Endothelial cell of umbilical vein (primary cell): ENCODE measurements at regions of chr4 and their contacts with region 1.

Region 1: DNA sequence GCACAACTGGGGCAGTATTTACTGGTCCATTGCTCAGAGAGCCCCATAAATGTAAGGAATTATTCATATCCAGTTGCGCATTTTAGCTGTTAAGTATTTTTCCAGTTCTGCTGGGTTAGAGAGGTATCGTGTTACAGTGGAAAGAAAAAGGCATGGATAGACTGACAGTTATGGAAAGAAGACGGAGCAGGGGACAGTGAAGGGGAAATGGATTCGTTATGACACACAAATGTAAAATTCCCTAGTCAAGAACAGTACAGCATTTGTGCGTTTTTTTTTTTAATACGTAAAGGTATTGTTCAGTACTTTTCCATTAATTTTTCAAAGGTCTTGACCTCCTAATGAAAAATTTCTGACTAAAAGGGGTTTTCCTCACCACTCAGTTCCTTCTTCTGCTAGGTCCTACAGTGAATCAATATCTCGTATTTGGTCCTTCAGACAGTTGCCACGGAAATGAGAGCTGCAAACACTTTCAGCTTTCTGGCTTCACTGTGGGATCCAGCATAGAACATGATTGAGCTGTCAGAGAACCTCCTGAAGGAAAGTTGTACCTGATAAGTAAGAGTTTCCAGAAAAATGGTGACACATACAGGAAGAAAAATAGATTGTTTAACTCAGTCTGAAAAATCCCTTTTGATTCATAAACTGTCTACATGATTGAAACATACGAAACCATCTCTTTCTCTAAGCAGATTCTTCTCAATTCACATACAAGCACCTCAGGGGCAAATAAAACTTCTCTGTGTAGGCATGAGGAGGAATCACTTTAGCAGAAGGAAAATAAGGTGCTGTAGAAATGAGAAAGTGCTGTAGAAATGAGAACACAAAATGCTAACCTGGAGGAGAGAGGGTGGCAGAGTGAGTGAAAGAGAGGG is 21.8 kb upstream of the BBS12 start:
- DNase-seq: peak; percentile 59
- H3K4me3 ChIP-seq: no peak overlapping the region
- H3K27ac ChIP-seq: no peak overlapping the region
- H3K4me1 ChIP-seq: peaks cover 2% of the 10 kb centered on the region
- H3K27me3 ChIP-seq: no peaks in the 10 kb centered on the region
- CTCF ChIP-seq: no peak
- POLR2A ChIP-seq: no peak

Region 2: GRCh38 chr4:122293374-122294365 is 417.0 kb before region 1 on chr4:
- CTCF ChIA-PET with region 1: no interaction called
- POLR2A ChIA-PET with region 1: no interaction called
- dilution Hi-C with region 1: no loop called
- intact Hi-C with region 1: no loop called
- DNase-seq: no peak
- H3K4me3 ChIP-seq: no peak overlapping the region
- H3K27ac ChIP-seq: no peak overlapping the region
- H3K4me1 ChIP-seq: no peaks in the 10 kb centered on the region
- H3K27me3 ChIP-seq: no peaks in the 10 kb centered on the region
- CTCF ChIP-seq: no peak
- POLR2A ChIP-seq: no peak

Region 3: DNA sequence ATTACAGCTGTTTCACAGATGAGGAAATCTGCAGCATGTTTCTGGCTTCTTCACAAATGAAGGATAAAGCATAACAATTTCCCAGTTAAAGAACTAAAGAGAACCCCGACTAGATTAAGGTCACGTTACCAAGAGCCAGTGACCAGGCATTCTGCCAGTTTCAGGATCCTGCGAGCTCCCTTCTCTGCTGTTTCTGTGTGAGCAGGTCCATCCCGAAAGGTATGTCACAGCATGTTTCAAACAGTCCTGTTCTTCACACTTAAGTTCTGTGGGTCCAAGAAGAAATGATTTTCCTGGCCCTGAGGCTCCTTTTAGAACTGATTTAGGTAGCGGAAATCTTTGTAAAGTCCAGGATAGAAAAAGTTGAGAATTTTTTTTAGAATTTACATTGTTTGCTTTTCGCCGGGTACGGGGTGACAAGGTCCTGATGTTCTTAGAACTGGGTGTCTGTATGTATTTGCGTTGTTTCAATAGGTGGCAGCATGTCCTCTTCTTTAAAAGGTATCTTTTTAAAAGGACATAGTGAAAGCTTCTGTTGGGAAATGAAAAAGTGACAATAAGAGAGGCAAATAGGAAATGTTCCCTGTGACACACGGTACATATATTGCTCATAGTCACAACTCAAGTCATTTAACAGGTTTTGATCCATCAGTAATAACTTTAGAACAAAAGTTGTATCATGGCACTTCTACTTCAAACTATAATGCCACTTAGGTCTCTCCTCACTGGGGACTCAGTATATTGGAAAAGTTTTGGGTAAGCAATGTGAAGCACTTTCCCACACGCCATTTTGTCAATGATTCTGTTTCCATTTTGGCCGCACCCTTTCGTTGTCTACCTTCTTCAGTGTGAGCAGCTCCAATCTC is 108.2 kb before region 1 on chr4:
- CTCF ChIA-PET with region 1: interaction called, 84 read pairs
- POLR2A ChIA-PET with region 1: no interaction called
- dilution Hi-C with region 1: no loop called
- intact Hi-C with region 1: no loop called
- DNase-seq: peak; percentile 58
- H3K4me3 ChIP-seq: no peak overlapping the region
- H3K27ac ChIP-seq: no peak overlapping the region
- H3K4me1 ChIP-seq: no peaks in the 10 kb centered on the region
- H3K27me3 ChIP-seq: peaks cover 10 to 14% of the 10 kb centered on the region in 2 experiments
- CTCF ChIP-seq: peak; percentile 15 to 16
- POLR2A ChIP-seq: no peak

Region 4: GRCh38 chr4:122777846-122778655 is 67.4 kb after region 1 on chr4:
- CTCF ChIA-PET with region 1: no interaction called
- POLR2A ChIA-PET with region 1: no interaction called
- dilution Hi-C with region 1: no loop called
- intact Hi-C with region 1: no loop called
- DNase-seq: no peak
- H3K4me3 ChIP-seq: no peak overlapping the region
- H3K27ac ChIP-seq: no peak overlapping the region
- H3K4me1 ChIP-seq: peaks cover 18% of the 10 kb centered on the region
- H3K27me3 ChIP-seq: no peaks in the 10 kb centered on the region
- CTCF ChIP-seq: no peak
- POLR2A ChIP-seq: no peak